ENCODE measurements at regions of chr10 and their contacts with region 1.

Region 1: DNA sequence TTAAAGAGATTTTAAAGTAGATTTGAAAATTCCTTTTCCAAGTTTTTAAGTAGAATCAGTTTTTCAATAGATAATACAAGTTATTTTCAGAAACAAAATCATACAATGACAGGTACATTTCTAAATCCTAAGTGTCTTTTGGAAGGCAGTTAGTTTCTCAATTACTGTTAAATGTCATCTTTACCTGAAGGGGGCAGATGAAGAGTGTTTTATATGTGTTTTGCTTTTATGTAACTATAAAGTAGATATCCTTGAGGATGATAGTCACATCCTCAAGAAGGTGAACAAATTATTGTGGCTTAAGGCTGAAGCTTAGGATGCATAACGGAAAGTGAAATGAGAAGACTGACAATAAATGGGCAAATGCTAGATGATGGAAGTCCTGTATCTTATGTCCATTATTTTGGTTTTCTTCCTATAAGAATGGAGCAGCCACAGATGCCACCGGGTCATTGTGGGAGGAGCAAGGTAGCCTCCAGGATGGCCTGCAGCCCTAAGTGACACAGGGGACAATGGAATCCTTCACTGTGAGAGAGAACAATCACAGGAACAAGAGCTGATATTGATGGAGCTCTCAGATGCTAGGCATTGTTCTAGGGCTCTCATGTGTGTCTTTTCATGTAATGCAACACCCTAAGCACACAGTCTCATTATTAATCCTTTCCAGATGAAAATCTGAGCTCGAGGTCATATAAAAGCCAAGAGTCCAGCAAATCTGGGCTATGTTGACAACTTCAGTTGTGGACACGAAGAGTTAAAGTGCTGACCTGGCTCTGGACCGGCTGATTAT is 14.1 kb upstream of the MKX start:
- DNase-seq: no peak
- ATAC-seq: no peak
- H3K4me3 ChIP-seq: no peak overlapping the region
- H3K27ac ChIP-seq: no peak overlapping the region
- H3K4me1 ChIP-seq: no peaks in the 10 kb centered on the region
- H3K27me3 ChIP-seq: peaks cover 0 to 5% (median 0%) of the 10 kb centered on the region in 7 donors
- CTCF ChIP-seq: no peak

Region 2: DNA sequence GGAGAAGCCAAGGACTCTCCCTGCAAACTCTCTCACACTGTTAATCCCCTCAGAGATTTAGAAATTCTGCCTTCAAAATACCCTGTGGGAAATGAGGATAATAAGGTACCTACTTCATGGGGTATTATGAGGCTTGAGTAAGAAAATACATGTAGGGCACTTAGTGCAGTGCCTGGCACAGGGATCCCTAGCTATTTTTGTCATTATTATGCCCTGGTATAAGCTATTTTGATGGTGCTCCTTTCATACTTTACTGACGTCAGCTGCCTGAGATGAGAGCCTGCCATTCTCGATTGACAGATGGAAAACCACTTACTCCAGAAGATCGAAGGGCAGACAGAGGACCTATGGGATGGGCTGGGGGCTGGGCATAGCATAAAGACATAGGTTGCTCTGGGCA is 44.2 kb before region 1 on chr10:
- intact Hi-C with region 1: loop called in 1 of 10 experiments (anchors 1 kb)
- DNase-seq: no peak
- ATAC-seq: peak; percentile 34 to 91 (median 72)
- H3K4me3 ChIP-seq: no peak overlapping the region
- H3K27ac ChIP-seq: peak overlapping the region in 4 of 10 donors; percentile 4 to 55 (median 31)
- H3K4me1 ChIP-seq: peaks cover 0 to 27% (median 8%) of the 10 kb centered on the region in 9 donors
- H3K27me3 ChIP-seq: peaks cover 0 to 15% (median 0%) of the 10 kb centered on the region in 7 donors
- CTCF ChIP-seq: no peak